Cardiac septum (tissue), 1 donor: ENCODE measurements at regions of chr3 and their contacts with region 1.

Region 1: GRCh38 chr3:50321336-50322114 is 1.0 kb downstream of the HYAL2 start:
- DNase-seq: peak; percentile 94

Region 2: GRCh38 chr3:50235716-50236496 is 85.6 kb before region 1 on chr3 and contains the start of gene GNAI2:
- intact Hi-C with region 1: loop called (anchors 5 kb)
- DNase-seq: peak; percentile 100
- total RNA-seq, gene GNAI2: 153 TPM

Region 3: GRCh38 chr3:50272911-50273693 is 48.4 kb before region 1 on chr3:
- intact Hi-C with region 1: loop called (anchors 2 kb)
- DNase-seq: peak; percentile 96

Region 4: GRCh38 chr3:50299929-50300685 is 21.4 kb before region 1 on chr3:
- intact Hi-C with region 1: loop called (anchors 1 kb)
- DNase-seq: no peak

Region 5: DNA sequence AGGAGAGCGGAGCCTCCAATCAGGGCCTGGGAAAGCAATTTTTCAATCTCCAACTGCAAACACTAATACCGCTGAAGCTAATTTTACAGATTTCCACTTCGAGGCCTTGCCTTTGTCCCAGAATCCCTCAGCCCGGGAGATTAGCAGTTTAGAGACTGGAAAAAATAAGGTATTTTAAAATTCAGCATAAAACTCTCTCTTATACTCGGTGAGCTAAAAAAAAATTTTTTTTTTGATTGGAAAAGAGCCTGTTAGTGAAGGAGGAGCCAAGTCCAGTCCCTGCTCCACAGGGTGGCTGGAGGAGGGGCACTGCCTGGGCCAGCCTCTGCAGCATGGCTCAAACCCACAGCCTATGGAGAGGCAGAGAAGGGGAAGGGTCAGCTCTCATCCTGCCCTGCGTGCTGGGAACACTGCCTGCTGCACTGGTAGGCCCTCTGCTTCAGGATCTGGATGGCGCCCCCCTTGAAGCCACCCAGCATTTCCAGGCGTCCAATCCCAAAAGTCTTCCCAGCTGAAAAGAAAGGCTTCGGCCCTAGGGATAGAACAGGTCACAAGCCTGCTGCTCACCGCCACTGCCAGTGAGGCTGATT is 133.1 kb after region 1 on chr3:
- intact Hi-C with region 1: no loop called
- DNase-seq: no peak